Activated T-helper 2 cell treated with anti-CD3 and anti-CD28 coated beads, Interferon-gamma antibody, Interleukin-2, Interleukin-4, amounts not matched to agents 10 μg/mL and 5 μg/mL and 100 μg/mL, durations not matched to agents 14 hours and 24 hours and 36 hours (primary cell): ENCODE measurements at regions of chr13 and their contacts with region 1.

Region 1: GRCh38 chr13:45055198-45055901 is 65.0 kb upstream of the GTF2F2 start:
- DNase-seq: no peak
- H3K4me3 Mint-ChIP-seq: no peak overlapping the region
- H3K27ac Mint-ChIP-seq: no peak overlapping the region
- H3K4me1 Mint-ChIP-seq: peaks cover 18% of the 10 kb centered on the region
- H3K27me3 Mint-ChIP-seq: peaks cover 62% of the 10 kb centered on the region

Region 2: DNA sequence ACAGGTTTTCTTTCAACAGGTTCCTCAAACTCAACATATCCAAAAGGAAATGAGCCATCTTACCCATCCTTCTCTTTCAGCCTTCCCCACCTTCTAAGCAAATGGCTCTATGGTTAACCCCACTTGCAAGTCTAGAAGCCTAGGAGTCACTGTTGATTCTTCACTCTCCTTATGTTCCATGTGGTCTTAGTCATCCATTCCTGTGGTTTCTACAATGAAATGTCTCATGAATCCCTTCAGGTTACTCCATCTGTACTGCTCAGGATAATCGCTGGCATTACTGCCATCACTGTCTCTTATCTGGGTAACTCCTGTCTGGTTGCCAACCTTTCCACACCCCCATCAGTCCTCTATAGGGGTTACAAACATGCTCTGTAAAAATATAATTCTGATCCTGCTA is 1649.9 kb before region 1 on chr13:
- intact Hi-C with region 1: no loop called
- DNase-seq: no peak
- H3K4me3 Mint-ChIP-seq: no peak overlapping the region
- H3K27ac Mint-ChIP-seq: no peak overlapping the region
- H3K4me1 Mint-ChIP-seq: no peaks in the 10 kb centered on the region
- H3K27me3 Mint-ChIP-seq: peaks cover 15% of the 10 kb centered on the region

Region 3: DNA sequence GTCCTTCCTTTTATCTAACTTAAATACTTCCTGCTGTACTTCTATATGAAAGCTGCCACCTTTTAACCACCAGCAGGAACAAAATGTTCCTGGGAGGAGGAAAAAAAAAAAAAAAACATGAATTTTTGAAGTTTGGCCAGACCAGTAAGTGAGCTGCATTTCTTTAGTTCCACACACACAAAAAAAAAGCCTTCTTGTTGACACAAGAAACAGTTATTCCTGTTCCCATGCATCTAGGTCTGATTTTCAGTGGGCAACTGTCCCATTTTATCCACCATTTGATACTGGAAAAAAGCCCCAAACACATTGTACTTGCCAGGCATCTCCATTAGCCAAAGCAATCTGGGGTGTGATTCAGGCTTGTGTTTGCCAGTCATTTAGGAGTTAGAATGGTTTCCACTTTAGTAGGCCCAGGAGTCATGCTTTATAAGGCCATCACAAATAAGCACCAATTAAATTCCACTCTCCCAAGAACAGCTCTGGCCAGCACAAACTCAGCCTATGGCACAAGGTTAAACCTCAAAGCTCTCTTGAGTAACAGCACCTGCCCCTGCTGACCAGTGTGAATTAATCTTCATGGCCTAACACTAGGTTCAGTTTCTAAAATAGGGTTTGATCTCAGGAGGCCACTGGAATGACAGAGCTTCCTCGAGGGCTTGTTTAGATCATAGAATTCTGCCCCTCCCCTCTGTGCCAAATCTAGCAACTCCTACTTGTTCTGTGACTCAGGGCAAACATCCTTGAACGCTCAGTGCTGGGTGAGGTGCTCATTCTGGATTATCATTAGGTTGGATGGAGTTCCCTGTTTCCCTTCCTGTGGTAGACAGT is 133.2 kb before region 1 on chr13:
- intact Hi-C with region 1: no loop called
- DNase-seq: no peak
- H3K4me3 Mint-ChIP-seq: no peak overlapping the region
- H3K27ac Mint-ChIP-seq: no peak overlapping the region
- H3K4me1 Mint-ChIP-seq: no peaks in the 10 kb centered on the region
- H3K27me3 Mint-ChIP-seq: peaks cover 20% of the 10 kb centered on the region

Region 4: GRCh38 chr13:45082964-45083363 is 27.6 kb after region 1 on chr13:
- intact Hi-C with region 1: no loop called
- DNase-seq: no peak
- H3K4me3 Mint-ChIP-seq: no peak overlapping the region
- H3K27ac Mint-ChIP-seq: no peak overlapping the region
- H3K4me1 Mint-ChIP-seq: no peaks in the 10 kb centered on the region
- H3K27me3 Mint-ChIP-seq: peaks cover 24% of the 10 kb centered on the region

Region 5: DNA sequence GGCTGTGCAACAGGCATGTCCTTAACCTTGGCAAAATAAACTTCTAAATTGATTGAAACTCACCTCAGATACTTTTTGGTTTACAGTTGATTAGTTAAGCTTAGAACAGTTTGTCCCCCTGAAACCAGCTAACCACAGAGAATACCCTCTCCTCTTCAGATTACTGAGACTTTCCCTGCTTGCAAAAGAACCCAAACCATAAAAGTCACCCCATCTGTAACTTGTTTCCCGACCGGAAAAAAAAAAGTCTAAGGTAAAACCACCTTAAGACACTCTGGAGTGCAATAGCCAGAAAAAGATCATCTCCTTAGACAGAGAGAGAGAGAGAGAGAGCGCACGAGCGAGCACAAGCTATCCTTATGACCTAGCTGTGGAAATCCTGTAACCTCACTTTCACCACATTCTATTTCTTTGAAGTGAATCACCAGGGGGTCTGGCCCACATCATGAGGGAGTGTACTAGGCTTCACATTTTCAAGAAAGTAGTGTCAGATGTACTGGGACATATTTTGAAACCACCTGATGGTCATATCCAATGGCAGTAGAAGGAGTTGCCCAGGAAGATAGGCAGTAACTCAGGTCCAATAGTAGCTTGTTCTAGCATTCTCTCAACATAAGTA is 53.9 kb after region 1 on chr13:
- intact Hi-C with region 1: loop called (anchors 2 kb)
- DNase-seq: no peak
- H3K4me3 Mint-ChIP-seq: no peak overlapping the region
- H3K27ac Mint-ChIP-seq: peak overlapping the region; percentile 6
- H3K4me1 Mint-ChIP-seq: peaks cover 6% of the 10 kb centered on the region
- H3K27me3 Mint-ChIP-seq: peaks cover 5% of the 10 kb centered on the region